Activated CD4-positive, alpha-beta T cell treated with anti-CD3 and anti-CD28 coated beads, Interleukin-2, amount 10 ng/mL, durations not matched to agents 24 days and 14 days (primary cell): ENCODE measurements at regions of chr6 and their contacts with region 1.

Region 1: DNA sequence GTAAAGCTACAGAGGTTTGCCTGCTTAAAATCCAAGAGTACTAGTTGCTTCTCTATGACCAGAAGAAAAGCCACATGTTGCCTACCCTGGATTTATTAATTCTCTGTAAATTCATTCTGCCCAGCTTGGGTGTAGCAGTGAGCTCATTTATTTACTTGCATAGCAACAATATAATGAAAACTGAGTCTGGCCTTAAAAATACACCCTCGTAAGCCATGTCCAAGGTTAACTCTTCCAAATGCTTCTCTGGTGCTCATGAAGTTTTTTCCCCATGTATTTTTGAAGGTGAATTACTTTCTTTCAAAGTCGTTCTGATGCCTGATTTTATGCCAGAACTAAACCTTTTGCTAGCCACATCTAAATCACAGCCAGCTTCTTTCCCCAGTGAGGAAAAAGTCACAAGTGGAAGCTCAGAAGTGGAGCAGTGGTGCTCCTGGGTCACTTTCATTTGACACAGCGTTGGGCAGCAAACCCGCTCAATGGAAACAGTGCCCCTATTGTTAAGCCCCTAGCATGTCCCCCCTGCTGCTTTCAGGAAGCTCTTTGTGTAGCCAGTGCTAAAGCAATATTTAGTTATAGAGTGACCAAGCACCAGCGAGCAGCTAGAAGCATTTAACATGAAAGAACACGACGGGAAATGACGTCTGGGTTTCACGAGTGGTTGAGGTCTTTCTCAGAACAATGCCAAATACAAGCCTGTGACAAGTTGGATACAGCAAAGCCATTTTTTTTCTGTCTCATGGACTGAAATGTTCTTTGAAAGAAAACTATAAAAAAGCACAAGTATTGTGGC is 29.8 kb downstream of the NEDD9 start:
- DNase-seq: peak; percentile 85
- H3K4me3 Mint-ChIP-seq: peak overlapping the region; percentile 58
- H3K27ac Mint-ChIP-seq: peak overlapping the region; percentile 86
- H3K4me1 Mint-ChIP-seq: peaks cover 72% of the 10 kb centered on the region
- H3K27me3 Mint-ChIP-seq: no peaks in the 10 kb centered on the region

Region 2: GRCh38 chr6:11224252-11224965 is 21.7 kb after region 1 on chr6:
- intact Hi-C with region 1: loop called (anchors 2 kb)
- DNase-seq: peak; percentile 87
- H3K4me3 Mint-ChIP-seq: peak overlapping the region; percentile 72
- H3K27ac Mint-ChIP-seq: peak overlapping the region; percentile 91
- H3K4me1 Mint-ChIP-seq: peaks cover 64% of the 10 kb centered on the region
- H3K27me3 Mint-ChIP-seq: no peaks in the 10 kb centered on the region